ENCODE measurements at regions of chr7 and their contacts with region 1.

Region 1: GRCh38 chr7:111394891-111395290 is 167.4 kb downstream of the IMMP2L start:
- DNase-seq: no peak
- ATAC-seq: no peak
- H3K4me3 Mint-ChIP-seq: no peak overlapping the region
- H3K27ac Mint-ChIP-seq: no peak overlapping the region
- H3K4me1 Mint-ChIP-seq: peaks cover 3% of the 10 kb centered on the region
- H3K27me3 Mint-ChIP-seq: no peaks in the 10 kb centered on the region
- CTCF ChIP-seq: no peak

Region 2: GRCh38 chr7:110977127-110977737 is 417.7 kb before region 1 on chr7:
- CTCF ChIA-PET with region 1: no interaction called
- POLR2A ChIA-PET with region 1: no interaction called
- intact Hi-C with region 1: no loop called
- DNase-seq: no peak
- ATAC-seq: no peak
- H3K4me3 Mint-ChIP-seq: no peak overlapping the region
- H3K27ac Mint-ChIP-seq: no peak overlapping the region
- H3K4me1 Mint-ChIP-seq: no peaks in the 10 kb centered on the region
- H3K27me3 Mint-ChIP-seq: no peaks in the 10 kb centered on the region
- CTCF ChIP-seq: no peak

Region 3: DNA sequence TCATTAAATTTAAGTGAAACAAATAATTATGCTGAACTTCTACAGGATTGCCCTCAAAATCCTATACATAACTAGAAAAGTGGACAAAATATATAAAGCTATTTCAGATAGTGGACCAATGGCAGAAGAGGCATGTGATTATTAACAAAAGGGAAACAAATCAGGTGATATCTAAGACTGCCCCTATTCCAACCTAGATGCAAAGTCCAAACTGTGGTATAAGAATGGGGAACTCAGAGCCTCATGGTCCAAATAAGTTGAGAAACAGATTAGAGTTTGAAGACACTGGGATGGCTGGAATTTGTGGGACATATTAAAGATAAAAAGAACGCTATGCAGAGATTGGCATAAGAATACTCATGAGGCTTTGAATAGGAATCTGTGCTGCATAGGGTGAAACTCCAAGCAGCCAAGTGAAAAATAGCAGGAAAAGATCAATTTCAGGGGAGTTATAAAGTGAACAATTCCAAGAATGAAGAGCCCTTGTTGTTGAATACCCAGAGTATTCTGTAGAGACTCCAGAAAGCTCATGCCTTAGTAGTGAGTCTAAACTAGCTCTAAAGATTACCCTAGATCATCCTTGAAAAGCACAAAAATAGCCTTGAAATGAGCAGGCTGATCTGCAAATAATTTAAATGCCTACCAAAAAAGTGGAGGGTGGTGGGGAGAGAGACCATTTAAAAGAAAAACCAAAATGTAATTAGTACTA is 15.0 kb after region 1 on chr7:
- CTCF ChIA-PET with region 1: no interaction called
- POLR2A ChIA-PET with region 1: no interaction called
- intact Hi-C with region 1: loop called (anchors 2 kb)
- DNase-seq: no peak
- ATAC-seq: no peak
- H3K4me3 Mint-ChIP-seq: no peak overlapping the region
- H3K27ac Mint-ChIP-seq: no peak overlapping the region
- H3K4me1 Mint-ChIP-seq: peaks cover 2% of the 10 kb centered on the region
- H3K27me3 Mint-ChIP-seq: no peaks in the 10 kb centered on the region
- CTCF ChIP-seq: no peak